ENCODE measurements at regions of chr10 and their contacts with region 1.

Region 1: GRCh38 chr10:84264611-84265141 is 19.8 kb downstream of the RGR start:
- DNase-seq: peak; percentile 58 to 69
- ATAC-seq: peak; percentile 92 to 97
- H3K4me3 ChIP-seq: no peak overlapping the region
- H3K27ac ChIP-seq: no peak overlapping the region
- H3K4me1 ChIP-seq: no peaks in the 10 kb centered on the region
- CTCF ChIP-seq: peak; percentile 90
- EP300 ChIP-seq: no peak
- POLR2A ChIP-seq: no peak
- RAD21 ChIP-seq: peak; percentile 92

Region 2: GRCh38 chr10:84244651-84245270 is 19.9 kb before region 1 on chr10 and contains the start of gene RGR:
- CTCF ChIA-PET with region 1: interaction called, 11 read pairs
- POLR2A ChIA-PET with region 1: no interaction called
- DNase-seq: no peak
- ATAC-seq: 0 out of 6 replicates have a peak, but pooled peaks of 1 of the 2 experiments have one; percentile 23
- H3K4me3 ChIP-seq: no peak within 1 kb of the TSS
- H3K27ac ChIP-seq: no peak within 1 kb of the TSS
- H3K4me1 ChIP-seq: no peaks in the 10 kb centered on the region
- CTCF ChIP-seq: no peak
- EP300 ChIP-seq: no peak
- POLR2A ChIP-seq: no peak
- RAD21 ChIP-seq: no peak
- polyA plus RNA-seq, gene RGR: not detected in 2 replicates

Region 3: GRCh38 chr10:84360637-84361365 is 96.1 kb after region 1 on chr10:
- CTCF ChIA-PET with region 1: interaction called, 14 read pairs
- POLR2A ChIA-PET with region 1: no interaction called
- DNase-seq: no peak
- ATAC-seq: peak in 1 of 2 experiments; percentile 71; a peak in 3 of 6 replicates
- H3K4me3 ChIP-seq: peak overlapping the region; percentile 35
- H3K27ac ChIP-seq: peak overlapping the region; percentile 50 to 65
- H3K4me1 ChIP-seq: peaks cover 31% of the 10 kb centered on the region
- CTCF ChIP-seq: no peak
- EP300 ChIP-seq: no peak
- POLR2A ChIP-seq: no peak
- RAD21 ChIP-seq: no peak

Region 4: GRCh38 chr10:84375011-84375410 is 110.3 kb after region 1 on chr10:
- CTCF ChIA-PET with region 1: interaction called, 18 read pairs
- POLR2A ChIA-PET with region 1: no interaction called
- DNase-seq: peak in 1 of 2 experiments; percentile 62
- ATAC-seq: peak; percentile 59 to 75; a peak in 3 of 6 replicates
- H3K4me3 ChIP-seq: no peak overlapping the region
- H3K27ac ChIP-seq: no peak overlapping the region
- H3K4me1 ChIP-seq: peaks cover 12% of the 10 kb centered on the region
- CTCF ChIP-seq: peak; percentile 83
- EP300 ChIP-seq: no peak
- POLR2A ChIP-seq: no peak
- RAD21 ChIP-seq: peak; percentile 82

Region 5: DNA sequence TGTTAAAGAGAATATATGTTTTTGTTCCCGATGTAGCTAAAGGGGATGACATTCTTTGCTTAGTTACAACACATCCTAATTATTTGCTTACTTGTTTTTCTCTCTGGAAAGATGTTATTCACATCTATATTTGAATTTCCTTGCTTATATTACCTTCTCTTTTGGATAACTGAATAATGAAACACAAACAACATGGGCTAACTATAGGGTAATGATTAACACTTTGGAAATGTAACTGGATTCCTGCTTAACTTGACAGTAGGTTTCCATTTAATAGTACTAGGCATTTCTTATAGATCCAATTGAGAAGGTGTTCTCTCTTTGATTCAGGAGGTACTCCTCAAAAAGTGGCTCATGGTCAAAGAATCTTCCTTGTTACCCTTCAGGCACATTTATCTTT is 204.8 kb after region 1 on chr10:
- CTCF ChIA-PET with region 1: no interaction called
- POLR2A ChIA-PET with region 1: no interaction called
- DNase-seq: peak in 1 of 2 experiments; percentile 6
- ATAC-seq: no peak; a peak in 1 of 6 replicates
- H3K4me3 ChIP-seq: no peak overlapping the region
- H3K27ac ChIP-seq: no peak overlapping the region
- H3K4me1 ChIP-seq: peaks cover 11% of the 10 kb centered on the region
- CTCF ChIP-seq: no peak
- EP300 ChIP-seq: no peak
- POLR2A ChIP-seq: no peak
- RAD21 ChIP-seq: no peak

Region 6: DNA sequence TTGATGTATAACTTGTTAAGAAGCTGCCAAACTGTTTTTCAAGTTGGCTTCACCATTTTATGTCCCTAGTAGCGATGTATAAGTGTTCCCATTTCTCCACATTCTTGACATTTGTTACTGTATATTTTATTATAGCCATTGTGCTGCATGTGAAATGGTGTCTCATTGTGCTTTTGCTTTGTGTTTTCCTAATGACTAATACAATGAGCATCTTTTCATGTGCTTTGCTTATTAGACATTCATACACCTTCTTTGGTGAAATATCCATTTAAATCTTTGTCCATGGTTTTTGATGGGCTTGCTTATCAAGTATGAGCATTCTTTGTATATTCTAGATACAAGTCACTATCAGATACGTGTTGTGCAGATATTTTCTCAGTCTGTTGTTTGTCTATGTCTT is 266.7 kb after region 1 on chr10:
- CTCF ChIA-PET with region 1: interaction called, 341 read pairs
- POLR2A ChIA-PET with region 1: no interaction called
- DNase-seq: no peak
- ATAC-seq: no peak
- H3K4me3 ChIP-seq: no peak overlapping the region
- H3K27ac ChIP-seq: no peak overlapping the region
- H3K4me1 ChIP-seq: no peaks in the 10 kb centered on the region
- CTCF ChIP-seq: no peak
- EP300 ChIP-seq: no peak
- POLR2A ChIP-seq: no peak
- RAD21 ChIP-seq: no peak

Measured in A549 (cell line).